Activated naive CD4-positive, alpha-beta T cell treated with anti-CD3 and anti-CD28 coated beads for 36 hours (primary cell): ENCODE measurements at regions of chr13 and their contacts with region 1.

Region 1: GRCh38 chr13:100440751-100441425 is 147.7 kb downstream of the GGACT start:
- DNase-seq: no peak
- H3K4me3 Mint-ChIP-seq: no peak overlapping the region
- H3K27ac Mint-ChIP-seq: no peak overlapping the region
- H3K4me1 Mint-ChIP-seq: no peaks in the 10 kb centered on the region
- H3K27me3 Mint-ChIP-seq: no peaks in the 10 kb centered on the region

Region 2: DNA sequence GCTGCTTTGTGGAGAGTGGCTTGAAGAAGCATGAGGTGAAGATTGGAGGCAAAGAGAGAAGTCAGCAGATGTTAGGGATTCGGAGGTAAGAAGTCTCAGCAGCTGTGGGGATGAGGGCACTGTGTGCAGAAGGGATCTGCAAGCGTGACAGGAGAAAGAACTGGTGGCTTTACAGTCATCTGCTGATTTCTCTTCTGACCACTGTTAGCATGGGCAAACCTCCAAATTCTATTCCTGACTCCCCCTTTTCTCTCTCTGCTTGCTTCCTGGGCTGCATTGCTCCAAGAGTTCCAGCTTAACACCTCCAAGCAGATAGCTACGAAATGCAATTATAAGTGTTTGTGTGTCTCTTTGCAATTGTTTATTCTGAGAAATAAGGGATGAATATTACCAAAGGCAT is 11.9 kb before region 1 on chr13:
- CTCF ChIA-PET with region 1: no interaction called
- intact Hi-C with region 1: loop called (anchors 1 kb)
- DNase-seq: no peak
- H3K4me3 Mint-ChIP-seq: no peak overlapping the region
- H3K27ac Mint-ChIP-seq: no peak overlapping the region
- H3K4me1 Mint-ChIP-seq: peaks cover 4% of the 10 kb centered on the region
- H3K27me3 Mint-ChIP-seq: no peaks in the 10 kb centered on the region